ENCODE measurements at regions of chr1 and their contacts with region 1.

Region 1: DNA sequence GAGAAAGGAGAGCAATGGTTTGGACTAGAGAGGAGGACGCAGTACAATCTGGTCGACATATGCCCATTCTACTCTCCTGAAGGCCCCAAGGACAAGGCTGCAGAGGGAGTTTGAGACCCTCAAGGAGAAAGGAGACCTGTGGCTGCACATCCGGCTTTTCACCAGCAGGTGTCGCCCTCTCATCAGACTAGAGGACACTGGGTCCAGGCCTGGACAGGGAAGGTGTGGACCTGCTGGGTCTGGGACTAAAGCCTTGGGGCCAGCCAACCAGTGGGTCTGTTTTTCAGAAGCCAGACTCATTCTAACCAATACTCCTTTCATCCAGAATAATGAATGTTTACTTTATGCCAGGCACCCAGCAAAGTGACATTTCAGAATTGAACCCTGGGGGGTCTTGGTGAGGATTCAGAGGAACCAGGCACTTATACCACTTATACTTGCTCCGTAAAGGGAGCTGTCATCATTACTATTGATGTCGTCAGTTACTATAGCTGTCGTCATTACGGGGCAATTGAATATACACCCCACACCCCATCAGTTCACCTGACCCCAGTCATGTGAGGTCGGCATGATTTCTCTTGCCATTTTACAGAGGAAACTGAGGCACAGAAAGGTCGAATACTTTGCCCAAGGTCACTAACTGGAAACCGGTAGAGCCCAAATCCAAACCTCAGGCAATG is 5.1 kb downstream of the SRARP start:
- DNase-seq: peak; percentile 79
- ATAC-seq: peak; percentile 48
- H3K4me3 ChIP-seq: no peak overlapping the region
- H3K4me3 Mint-ChIP-seq: no peak overlapping the region
- H3K27ac ChIP-seq: no peak overlapping the region
- H3K27ac Mint-ChIP-seq: no peak overlapping the region
- H3K4me1 ChIP-seq: peaks cover 31 to 46% of the 10 kb centered on the region in 2 donors
- H3K4me1 Mint-ChIP-seq: peaks cover 41% of the 10 kb centered on the region
- H3K27me3 ChIP-seq: no peaks in the 10 kb centered on the region
- H3K27me3 Mint-ChIP-seq: no peaks in the 10 kb centered on the region
- CTCF ChIP-seq: peak; percentile 99

Region 2: GRCh38 chr1:15803354-15803753 is 205.8 kb before region 1 on chr1:
- CTCF ChIA-PET with region 1: interaction called, 5 read pairs
- POLR2A ChIA-PET with region 1: no interaction called
- intact Hi-C with region 1: loop called (anchors 5 kb)
- DNase-seq: peak; percentile 68
- ATAC-seq: peak; percentile 53
- H3K4me3 ChIP-seq: no peak overlapping the region
- H3K4me3 Mint-ChIP-seq: no peak overlapping the region
- H3K27ac ChIP-seq: no peak overlapping the region
- H3K27ac Mint-ChIP-seq: no peak overlapping the region
- H3K4me1 ChIP-seq: no peaks in the 10 kb centered on the region
- H3K4me1 Mint-ChIP-seq: no peaks in the 10 kb centered on the region
- H3K27me3 ChIP-seq: peaks cover 0 to 2% (median 0%) of the 10 kb centered on the region in 4 experiments
- H3K27me3 Mint-ChIP-seq: peaks cover 7% of the 10 kb centered on the region
- CTCF ChIP-seq: peak; percentile 67

Region 3: DNA sequence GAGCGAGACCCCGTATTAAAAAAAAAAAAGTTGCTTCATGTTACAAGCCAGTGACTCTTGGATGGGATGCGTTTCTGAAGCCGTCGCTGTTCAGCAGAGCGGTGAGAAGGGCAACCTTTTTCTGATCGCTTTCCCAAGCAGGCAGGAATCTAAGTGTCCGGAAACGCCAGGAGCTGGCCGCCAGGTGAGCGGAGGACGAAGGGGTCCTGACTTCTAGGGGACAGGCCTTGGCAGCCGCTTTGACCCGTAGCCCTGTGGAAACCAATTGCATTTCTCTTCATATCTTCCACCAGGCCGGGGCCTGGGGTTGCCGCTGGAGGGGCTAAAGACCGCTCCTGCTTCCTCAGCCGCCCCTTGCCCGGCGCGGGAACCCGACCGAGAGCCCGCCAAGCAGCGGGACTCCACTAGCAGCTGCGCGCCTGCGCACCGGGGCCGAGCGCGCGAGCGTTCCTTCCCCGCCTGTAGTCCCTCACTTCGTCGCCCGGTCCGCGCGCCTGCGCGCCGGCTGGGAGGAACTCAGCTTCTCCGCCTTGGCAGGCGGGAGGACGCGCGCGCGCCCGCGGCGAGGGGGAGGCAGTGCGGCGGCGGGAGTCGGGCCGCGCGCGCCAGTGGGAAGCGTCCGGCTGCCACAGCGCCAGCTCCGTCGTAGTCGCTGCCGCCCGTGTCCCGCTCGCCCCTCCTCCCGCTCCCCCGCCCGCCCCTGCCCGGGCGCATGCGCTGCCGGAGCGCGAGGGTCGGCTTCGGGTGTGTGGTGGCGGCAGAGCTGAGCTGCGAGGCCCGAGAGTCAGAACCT is 161.9 kb before region 1 on chr1 and contains the start of gene SPEN:
- CTCF ChIA-PET with region 1: interaction called, 3 read pairs
- POLR2A ChIA-PET with region 1: interaction called, 11 read pairs
- intact Hi-C with region 1: no loop called
- DNase-seq: peak; percentile 99
- ATAC-seq: peak; percentile 80
- H3K4me3 ChIP-seq: peak within 1 kb of the TSS; percentile 82 to 99 (median 94)
- H3K4me3 Mint-ChIP-seq: peak within 1 kb of the TSS; percentile 97
- H3K27ac ChIP-seq: peak within 1 kb of the TSS; percentile 87 to 98
- H3K27ac Mint-ChIP-seq: peak within 1 kb of the TSS; percentile 99
- H3K4me1 ChIP-seq: peaks cover 51 to 72% of the 10 kb centered on the region in 2 donors
- H3K4me1 Mint-ChIP-seq: peaks cover 53% of the 10 kb centered on the region
- H3K27me3 ChIP-seq: no peaks in the 10 kb centered on the region
- H3K27me3 Mint-ChIP-seq: no peaks in the 10 kb centered on the region
- CTCF ChIP-seq: no peak
- total RNA-seq, gene SPEN: 126 and 140 TPM in 2 replicates

Region 4: GRCh38 chr1:15966081-15966955 is 42.9 kb before region 1 on chr1:
- CTCF ChIA-PET with region 1: interaction called, 3 read pairs
- POLR2A ChIA-PET with region 1: no interaction called
- intact Hi-C with region 1: loop called (anchors 1 kb)
- DNase-seq: peak; percentile 88
- ATAC-seq: peak; percentile 79
- H3K4me3 ChIP-seq: peak overlapping the region in 4 of 5 experiments; percentile 27 to 40 (median 30)
- H3K4me3 Mint-ChIP-seq: peak overlapping the region; percentile 74
- H3K27ac ChIP-seq: peak overlapping the region; percentile 86 to 88
- H3K27ac Mint-ChIP-seq: peak overlapping the region; percentile 97
- H3K4me1 ChIP-seq: peaks cover 56 to 66% of the 10 kb centered on the region in 2 donors
- H3K4me1 Mint-ChIP-seq: peaks cover 65% of the 10 kb centered on the region
- H3K27me3 ChIP-seq: no peaks in the 10 kb centered on the region
- H3K27me3 Mint-ChIP-seq: no peaks in the 10 kb centered on the region
- CTCF ChIP-seq: no peak

Region 5: DNA sequence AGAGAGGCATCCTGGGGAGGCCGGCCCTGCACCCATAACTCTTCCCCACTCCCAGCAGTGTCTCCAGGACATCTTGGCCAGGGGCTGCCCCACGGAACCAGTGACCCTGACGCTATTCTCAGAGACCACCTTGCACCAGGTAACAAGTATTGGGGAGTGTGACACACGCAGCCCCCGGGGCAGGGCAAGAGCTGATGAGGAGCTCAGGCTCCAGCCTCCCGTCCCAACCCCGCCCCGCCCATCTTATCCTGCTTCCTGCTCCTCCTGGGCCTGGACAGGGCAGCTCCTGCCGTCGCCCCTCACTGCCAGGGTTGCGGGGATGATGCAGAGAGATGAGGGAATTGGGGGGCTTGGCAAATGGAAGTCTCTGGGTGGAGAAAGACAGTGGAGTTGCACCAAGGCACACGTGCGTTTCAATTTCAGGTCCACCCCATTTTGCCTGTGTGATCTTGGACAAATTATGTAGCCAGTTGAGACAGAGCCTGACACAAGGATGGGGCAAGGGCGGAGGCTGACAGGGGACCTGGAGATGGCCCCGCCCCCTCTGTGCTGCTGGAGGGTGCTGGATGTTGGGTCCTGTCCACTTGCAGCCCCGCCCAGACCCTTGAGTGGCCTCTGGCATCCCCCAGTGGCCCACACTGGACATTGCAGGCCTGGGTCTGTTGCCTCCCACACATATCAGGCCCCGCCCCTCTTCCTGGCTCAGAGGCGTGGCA is 23.4 kb after region 1 on chr1:
- CTCF ChIA-PET with region 1: interaction called, 6 read pairs
- POLR2A ChIA-PET with region 1: no interaction called
- intact Hi-C with region 1: loop called (anchors 1 kb)
- DNase-seq: peak; percentile 72
- ATAC-seq: peak; percentile 97
- H3K4me3 ChIP-seq: no peak overlapping the region
- H3K4me3 Mint-ChIP-seq: no peak overlapping the region
- H3K27ac ChIP-seq: no peak overlapping the region
- H3K27ac Mint-ChIP-seq: no peak overlapping the region
- H3K4me1 ChIP-seq: no peaks in the 10 kb centered on the region
- H3K4me1 Mint-ChIP-seq: peaks cover 5% of the 10 kb centered on the region
- H3K27me3 ChIP-seq: peaks cover 0 to 21% (median 5%) of the 10 kb centered on the region in 4 experiments
- H3K27me3 Mint-ChIP-seq: peaks cover 38% of the 10 kb centered on the region
- CTCF ChIP-seq: peak; percentile 71

Region 6: DNA sequence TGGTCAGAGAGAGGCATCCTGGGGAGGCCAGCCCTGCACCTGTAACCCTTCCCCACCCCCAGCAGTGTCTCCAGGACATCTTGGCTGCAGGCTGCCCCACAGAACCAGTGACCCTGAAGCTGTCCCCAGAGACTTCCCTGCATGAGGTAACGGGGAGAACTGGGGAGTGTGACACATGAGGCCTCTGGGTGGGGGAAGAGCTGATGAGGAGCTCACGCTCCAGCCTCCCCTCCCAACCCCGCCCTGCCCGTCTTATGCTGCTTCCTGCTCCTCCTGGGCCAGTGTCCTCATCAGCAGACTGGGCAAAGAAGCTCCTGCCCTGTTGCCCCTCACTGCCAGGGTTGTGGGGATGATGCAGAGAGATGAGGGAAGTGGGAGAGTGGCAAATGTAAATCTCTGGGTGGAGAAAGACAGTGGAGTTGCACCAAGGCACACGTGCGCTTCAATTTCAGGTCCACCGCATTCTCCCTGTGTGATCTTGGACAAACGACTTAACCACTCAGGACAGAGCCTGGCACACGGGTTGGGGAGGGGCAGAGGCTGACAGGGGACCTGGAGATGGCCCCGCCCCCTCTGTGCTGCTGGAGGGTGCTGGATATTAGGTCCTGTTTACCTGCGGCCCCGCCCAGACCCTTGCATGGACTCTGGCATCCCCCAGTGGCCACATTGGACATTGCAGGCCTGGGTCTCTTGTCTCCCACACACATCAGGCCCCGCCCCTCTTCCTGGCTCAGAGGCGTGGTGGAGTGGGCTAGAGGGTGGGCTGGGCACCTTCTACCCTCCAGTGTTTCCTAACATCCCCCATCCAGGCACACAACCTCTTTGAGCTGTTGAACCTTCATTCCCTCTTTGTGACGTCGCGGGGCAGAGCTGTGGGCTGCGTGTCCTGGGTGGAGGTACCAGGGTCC is 46.7 kb after region 1 on chr1:
- CTCF ChIA-PET with region 1: interaction called, 20 read pairs
- POLR2A ChIA-PET with region 1: no interaction called
- intact Hi-C with region 1: loop called (anchors 1 kb)
- DNase-seq: peak; percentile 91
- ATAC-seq: peak; percentile 100
- H3K4me3 ChIP-seq: no peak overlapping the region
- H3K4me3 Mint-ChIP-seq: no peak overlapping the region
- H3K27ac ChIP-seq: no peak overlapping the region
- H3K27ac Mint-ChIP-seq: no peak overlapping the region
- H3K4me1 ChIP-seq: peaks cover 4 to 5% of the 10 kb centered on the region in 2 donors
- H3K4me1 Mint-ChIP-seq: peaks cover 6% of the 10 kb centered on the region
- H3K27me3 ChIP-seq: peaks cover 0 to 2% (median 0%) of the 10 kb centered on the region in 4 experiments
- H3K27me3 Mint-ChIP-seq: peaks cover 9% of the 10 kb centered on the region
- CTCF ChIP-seq: peak; percentile 74

Region 7: GRCh38 chr1:16101623-16102022 is 92.5 kb after region 1 on chr1:
- CTCF ChIA-PET with region 1: no interaction called
- POLR2A ChIA-PET with region 1: no interaction called
- intact Hi-C with region 1: no loop called
- DNase-seq: no peak
- ATAC-seq: no peak
- H3K4me3 ChIP-seq: no peak overlapping the region
- H3K4me3 Mint-ChIP-seq: no peak overlapping the region
- H3K27ac ChIP-seq: no peak overlapping the region
- H3K27ac Mint-ChIP-seq: no peak overlapping the region
- H3K4me1 ChIP-seq: no peaks in the 10 kb centered on the region
- H3K4me1 Mint-ChIP-seq: no peaks in the 10 kb centered on the region
- H3K27me3 ChIP-seq: peaks cover 0 to 5% (median 2%) of the 10 kb centered on the region in 4 experiments
- H3K27me3 Mint-ChIP-seq: peaks cover 40% of the 10 kb centered on the region
- CTCF ChIP-seq: no peak

Region 8: DNA sequence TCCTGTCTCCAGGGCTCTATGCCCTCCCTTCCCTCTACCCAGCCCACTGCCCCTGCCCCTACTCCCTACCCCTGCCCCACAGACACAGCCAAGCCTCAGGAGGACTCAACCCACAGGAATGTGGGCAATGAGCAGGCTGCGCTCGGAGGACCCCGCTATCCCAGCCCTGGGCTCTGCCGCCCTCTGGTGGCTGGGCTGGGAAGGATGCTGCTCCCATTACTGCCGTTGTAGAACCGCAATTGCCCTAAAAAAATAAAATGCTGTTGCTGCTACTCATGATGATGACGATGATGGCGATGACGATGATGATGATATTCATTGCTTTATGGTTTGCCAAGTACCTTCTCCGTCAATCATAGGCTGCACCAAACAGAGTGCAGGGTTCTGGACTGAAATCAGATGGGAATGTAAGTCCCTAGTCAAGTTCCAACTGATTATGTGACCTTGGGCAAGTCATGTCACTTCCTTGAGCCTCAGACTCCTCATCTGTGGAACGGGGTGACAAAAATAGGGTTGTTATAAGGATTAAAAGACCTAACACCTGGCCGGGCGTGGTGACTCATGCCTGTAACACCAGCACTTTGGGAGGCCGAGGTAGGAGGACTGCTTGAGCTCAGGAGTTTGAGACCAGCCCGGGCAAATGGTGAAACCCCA is 178.7 kb after region 1 on chr1:
- CTCF ChIA-PET with region 1: interaction called, 12 read pairs
- POLR2A ChIA-PET with region 1: no interaction called
- intact Hi-C with region 1: loop called (anchors 1 kb)
- DNase-seq: peak; percentile 81
- ATAC-seq: peak; percentile 88
- H3K4me3 ChIP-seq: no peak overlapping the region
- H3K4me3 Mint-ChIP-seq: no peak overlapping the region
- H3K27ac ChIP-seq: no peak overlapping the region
- H3K27ac Mint-ChIP-seq: no peak overlapping the region
- H3K4me1 ChIP-seq: peaks cover 5 to 7% of the 10 kb centered on the region in 2 donors
- H3K4me1 Mint-ChIP-seq: peaks cover 2% of the 10 kb centered on the region
- H3K27me3 ChIP-seq: peaks cover 0 to 26% (median 9%) of the 10 kb centered on the region in 4 experiments
- H3K27me3 Mint-ChIP-seq: peaks cover 24% of the 10 kb centered on the region
- CTCF ChIP-seq: peak; percentile 95